ENCODE measurements at regions of chr11 and their contacts with region 1.

Region 1: GRCh38 chr11:60899046-60899936 is 7.1 kb downstream of the PRPF19 start:
- DNase-seq: peak; percentile 44
- ATAC-seq: peak; percentile 96
- H3K4me3 Mint-ChIP-seq: no peak overlapping the region
- H3K27ac Mint-ChIP-seq: peak overlapping the region; percentile 35
- H3K4me1 Mint-ChIP-seq: peaks cover 12% of the 10 kb centered on the region
- H3K27me3 Mint-ChIP-seq: no peaks in the 10 kb centered on the region
- CTCF ChIP-seq: peak; percentile 100

Region 2: GRCh38 chr11:60775420-60775961 is 123.8 kb before region 1 on chr11:
- CTCF ChIA-PET with region 1: interaction called, 12 read pairs
- POLR2A ChIA-PET with region 1: interaction called, 3 read pairs
- intact Hi-C with region 1: no loop called
- DNase-seq: peak; percentile 92
- ATAC-seq: peak; percentile 98
- H3K4me3 Mint-ChIP-seq: no peak overlapping the region
- H3K27ac Mint-ChIP-seq: no peak overlapping the region
- H3K4me1 Mint-ChIP-seq: peaks cover 11% of the 10 kb centered on the region
- H3K27me3 Mint-ChIP-seq: no peaks in the 10 kb centered on the region
- CTCF ChIP-seq: peak; percentile 78

Region 3: GRCh38 chr11:60841797-60842667 is 57.3 kb before region 1 on chr11 and contains the start of gene CCDC86:
- CTCF ChIA-PET with region 1: interaction called, 18 read pairs
- POLR2A ChIA-PET with region 1: interaction called, 23 read pairs
- intact Hi-C with region 1: no loop called
- DNase-seq: peak; percentile 96
- ATAC-seq: peak; percentile 98
- H3K4me3 Mint-ChIP-seq: peak within 1 kb of the TSS; percentile 75
- H3K27ac Mint-ChIP-seq: peak within 1 kb of the TSS; percentile 94
- H3K4me1 Mint-ChIP-seq: peaks cover 38% of the 10 kb centered on the region
- H3K27me3 Mint-ChIP-seq: no peaks in the 10 kb centered on the region
- CTCF ChIP-seq: no peak
- total RNA-seq, gene CCDC86: 48.1 to 51.4 TPM

Region 4: DNA sequence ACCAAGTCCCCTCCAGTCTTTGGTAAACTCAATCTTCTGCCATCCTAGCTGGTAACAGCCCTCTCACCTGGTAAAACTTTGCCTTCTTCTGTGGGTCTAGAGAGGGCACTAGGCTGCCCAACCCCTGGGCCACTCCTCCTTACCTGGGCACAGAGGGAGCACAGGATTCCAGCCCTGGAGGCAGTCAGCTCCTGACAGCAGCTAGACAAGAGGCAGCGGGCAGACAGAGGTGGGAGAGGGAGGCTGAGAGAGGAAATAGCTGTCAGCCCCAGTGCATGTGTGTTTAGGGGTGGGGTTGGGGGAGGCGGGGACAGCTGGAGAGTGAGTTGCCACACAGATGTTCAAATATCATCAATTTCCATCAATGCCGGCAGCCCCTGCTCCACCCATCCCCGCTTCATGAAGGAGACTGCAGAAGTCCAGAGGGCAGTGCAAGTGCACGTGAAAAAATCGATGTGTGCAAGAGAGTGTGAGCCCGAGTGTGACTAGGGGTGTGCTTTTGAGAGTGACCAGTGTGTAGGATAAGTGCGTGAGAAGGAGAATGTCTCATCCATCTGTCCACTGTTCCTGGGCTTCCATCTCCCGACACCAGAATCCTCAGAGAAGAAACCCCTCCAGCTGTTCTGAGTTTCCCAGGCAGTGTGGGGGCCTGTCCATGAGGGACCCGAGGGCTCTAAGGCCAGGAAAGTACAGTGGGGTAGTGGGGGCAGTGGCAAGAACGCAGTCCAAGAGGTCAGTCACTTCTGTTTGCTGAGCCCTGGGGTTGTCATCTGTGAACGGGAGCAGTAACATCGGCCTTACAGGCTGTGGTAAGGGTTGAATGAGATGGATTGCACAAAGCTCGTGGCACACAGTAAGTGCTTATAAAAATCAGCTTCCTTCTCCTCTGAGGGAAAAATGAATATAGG is 43.3 kb before region 1 on chr11 and contains the start of gene PTGDR2:
- CTCF ChIA-PET with region 1: interaction called, 12 read pairs
- POLR2A ChIA-PET with region 1: interaction called, 4 read pairs
- intact Hi-C with region 1: no loop called
- DNase-seq: no peak
- ATAC-seq: no peak
- H3K4me3 Mint-ChIP-seq: no peak within 1 kb of the TSS
- H3K27ac Mint-ChIP-seq: no peak within 1 kb of the TSS
- H3K4me1 Mint-ChIP-seq: peaks cover 23% of the 10 kb centered on the region
- H3K27me3 Mint-ChIP-seq: no peaks in the 10 kb centered on the region
- CTCF ChIP-seq: no peak
- total RNA-seq, gene PTGDR2: 0.23 to 0.38 TPM

Region 5: DNA sequence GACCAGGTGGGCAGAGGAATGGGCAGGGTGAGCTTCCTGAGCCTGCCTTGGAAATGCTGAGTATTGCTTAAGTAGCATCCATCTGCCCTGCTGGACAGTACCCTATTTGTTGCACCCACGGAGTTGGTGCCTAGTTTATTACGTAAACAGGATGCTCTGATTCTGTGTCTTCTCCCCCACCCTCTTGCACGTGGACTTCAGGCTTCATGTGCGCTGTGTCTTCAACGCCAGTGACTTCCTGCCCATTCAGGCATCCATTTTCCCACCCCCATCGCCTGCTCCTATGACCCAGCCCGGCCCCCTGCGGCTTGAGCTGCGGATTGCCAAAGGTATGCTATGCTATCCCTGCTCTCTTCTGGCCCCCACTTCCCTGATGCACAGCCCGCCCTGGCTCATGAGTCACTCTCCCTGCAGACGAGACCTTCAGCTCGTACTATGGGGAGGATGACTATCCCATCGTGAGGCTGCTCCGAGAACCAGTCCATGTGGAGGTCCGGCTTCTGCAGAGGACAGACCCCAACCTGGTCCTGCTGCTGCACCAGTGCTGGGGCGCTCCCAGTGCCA is 26.2 kb before region 1 on chr11:
- CTCF ChIA-PET with region 1: interaction called, 19 read pairs
- POLR2A ChIA-PET with region 1: no interaction called
- intact Hi-C with region 1: no loop called
- DNase-seq: no peak
- ATAC-seq: no peak
- H3K4me3 Mint-ChIP-seq: no peak overlapping the region
- H3K27ac Mint-ChIP-seq: no peak overlapping the region
- H3K4me1 Mint-ChIP-seq: peaks cover 33% of the 10 kb centered on the region
- H3K27me3 Mint-ChIP-seq: no peaks in the 10 kb centered on the region
- CTCF ChIP-seq: no peak

Region 6: GRCh38 chr11:60880643-60881282 is 18.5 kb before region 1 on chr11:
- CTCF ChIA-PET with region 1: interaction called, 19 read pairs
- POLR2A ChIA-PET with region 1: no interaction called
- intact Hi-C with region 1: no loop called
- DNase-seq: no peak
- ATAC-seq: no peak
- H3K4me3 Mint-ChIP-seq: no peak overlapping the region
- H3K27ac Mint-ChIP-seq: no peak overlapping the region
- H3K4me1 Mint-ChIP-seq: no peaks in the 10 kb centered on the region
- H3K27me3 Mint-ChIP-seq: no peaks in the 10 kb centered on the region
- CTCF ChIP-seq: no peak

Region 7: GRCh38 chr11:60887556-60887955 is 11.7 kb before region 1 on chr11:
- CTCF ChIA-PET with region 1: interaction called, 67 read pairs
- POLR2A ChIA-PET with region 1: interaction called, 12 read pairs
- intact Hi-C with region 1: no loop called
- DNase-seq: peak; percentile 67
- ATAC-seq: peak; percentile 92
- H3K4me3 Mint-ChIP-seq: no peak overlapping the region
- H3K27ac Mint-ChIP-seq: no peak overlapping the region
- H3K4me1 Mint-ChIP-seq: peaks cover 3% of the 10 kb centered on the region
- H3K27me3 Mint-ChIP-seq: no peaks in the 10 kb centered on the region
- CTCF ChIP-seq: no peak

Region 8: GRCh38 chr11:61061081-61061826 is 162.0 kb after region 1 on chr11:
- CTCF ChIA-PET with region 1: no interaction called
- POLR2A ChIA-PET with region 1: no interaction called
- intact Hi-C with region 1: no loop called
- DNase-seq: peak; percentile 94
- ATAC-seq: peak; percentile 80
- H3K4me3 Mint-ChIP-seq: peak overlapping the region; percentile 62
- H3K27ac Mint-ChIP-seq: peak overlapping the region; percentile 91
- H3K4me1 Mint-ChIP-seq: peaks cover 72% of the 10 kb centered on the region
- H3K27me3 Mint-ChIP-seq: no peaks in the 10 kb centered on the region
- CTCF ChIP-seq: no peak

Measured in activated CD8-positive, alpha-beta T cell treated with anti-CD3 and anti-CD28 coated beads for 36 hours (primary cell).